ENCODE measurements at regions of chr1 and their contacts with region 1.

Region 1: DNA sequence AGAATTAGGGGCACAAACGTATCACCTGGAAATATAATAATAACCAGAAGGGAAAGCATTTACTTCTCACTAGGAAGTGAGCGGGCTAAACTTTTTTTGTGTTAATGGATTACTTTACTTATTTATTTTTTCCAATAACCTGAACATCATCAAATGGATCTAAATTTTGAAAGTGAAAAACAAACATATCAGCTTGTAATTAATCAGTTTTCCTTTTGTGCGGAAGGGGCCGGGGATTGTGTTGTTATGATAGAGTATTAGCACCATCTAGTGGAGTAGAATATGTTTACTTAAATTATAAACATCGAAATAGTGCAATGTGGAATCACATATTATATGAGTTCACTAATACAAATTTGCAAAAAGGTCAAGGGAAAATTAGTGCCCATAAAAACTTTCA is 9.0 kb downstream of the CFH start:
- DNase-seq: peak in 4 of 5 donors; percentile 38 to 42 (median 40)
- H3K4me3 ChIP-seq: no peak overlapping the region
- H3K4me3 Mint-ChIP-seq: peak overlapping the region in 6 of 8 donors; percentile 9 to 44 (median 23)
- H3K27ac ChIP-seq: no peak overlapping the region
- H3K27ac Mint-ChIP-seq: no peak overlapping the region
- H3K4me1 ChIP-seq: peaks cover 14% of the 10 kb centered on the region
- H3K4me1 Mint-ChIP-seq: peaks cover 10 to 20% (median 13%) of the 10 kb centered on the region in 4 donors
- H3K27me3 ChIP-seq: no peaks in the 10 kb centered on the region
- H3K27me3 Mint-ChIP-seq: no peaks in the 10 kb centered on the region

Region 2: GRCh38 chr1:196148367-196148970 is 512.4 kb before region 1 on chr1:
- CTCF ChIA-PET with region 1: interaction called, 35 read pairs
- POLR2A ChIA-PET with region 1: no interaction called
- intact Hi-C with region 1: no loop called
- DNase-seq: peak in 4 of 5 donors; percentile 16 to 21 (median 20)
- H3K4me3 ChIP-seq: no peak overlapping the region
- H3K4me3 Mint-ChIP-seq: no peak overlapping the region
- H3K27ac ChIP-seq: no peak overlapping the region
- H3K27ac Mint-ChIP-seq: no peak overlapping the region
- H3K4me1 ChIP-seq: no peaks in the 10 kb centered on the region
- H3K4me1 Mint-ChIP-seq: no peaks in the 10 kb centered on the region
- H3K27me3 ChIP-seq: no peaks in the 10 kb centered on the region
- H3K27me3 Mint-ChIP-seq: no peaks in the 10 kb centered on the region

Region 3: DNA sequence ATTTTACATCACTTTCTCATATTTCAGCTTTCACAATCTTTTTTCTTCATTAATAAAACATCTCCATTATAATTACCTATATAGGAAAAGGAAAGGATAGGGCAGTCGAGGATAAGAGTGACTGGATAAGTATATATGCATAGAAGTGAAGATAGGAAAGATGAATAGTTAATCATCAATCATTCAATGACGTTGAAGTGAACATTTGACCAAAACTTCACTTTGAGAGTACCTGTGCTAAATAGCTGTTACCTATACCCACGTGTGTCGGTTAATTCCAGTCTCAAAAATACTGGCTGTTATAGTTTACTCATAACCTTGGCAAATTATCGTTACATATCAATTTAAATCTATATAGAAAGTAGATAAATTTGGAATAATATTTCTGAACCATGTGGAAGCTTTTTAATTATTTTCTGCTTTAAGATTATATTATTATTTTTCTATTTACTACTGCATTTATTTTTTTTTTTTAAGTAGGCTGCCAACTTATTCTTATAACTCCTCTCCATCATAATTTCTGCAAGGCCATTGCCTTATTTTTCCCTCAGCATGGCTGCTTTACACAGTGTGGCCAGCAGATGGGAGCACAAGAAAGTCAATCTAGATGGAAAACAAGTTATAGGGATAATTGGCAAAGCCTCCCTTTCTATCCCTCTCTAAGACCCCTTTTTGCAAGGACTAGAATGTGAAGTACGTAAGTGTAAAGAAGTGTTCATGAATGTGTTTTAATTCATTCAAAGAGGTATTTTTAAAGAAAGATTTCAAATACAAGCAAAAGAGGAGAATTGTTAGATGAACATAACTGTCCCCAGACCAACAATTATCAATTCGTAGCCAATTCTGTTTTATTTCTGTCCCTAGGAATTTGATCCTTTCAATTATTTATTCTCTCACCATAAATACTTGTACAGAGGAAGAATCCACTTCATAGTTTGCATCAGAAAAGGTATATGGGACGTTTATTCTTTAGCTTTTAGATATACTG is 343.0 kb before region 1 on chr1:
- CTCF ChIA-PET with region 1: no interaction called
- POLR2A ChIA-PET with region 1: no interaction called
- intact Hi-C with region 1: loop called (anchors 2 kb)
- DNase-seq: no peak
- H3K4me3 ChIP-seq: no peak overlapping the region
- H3K4me3 Mint-ChIP-seq: no peak overlapping the region
- H3K27ac ChIP-seq: no peak overlapping the region
- H3K27ac Mint-ChIP-seq: no peak overlapping the region
- H3K4me1 ChIP-seq: no peaks in the 10 kb centered on the region
- H3K4me1 Mint-ChIP-seq: no peaks in the 10 kb centered on the region
- H3K27me3 ChIP-seq: no peaks in the 10 kb centered on the region
- H3K27me3 Mint-ChIP-seq: no peaks in the 10 kb centered on the region

Region 4: GRCh38 chr1:196611873-196612272 is 49.0 kb before region 1 on chr1:
- CTCF ChIA-PET with region 1: no interaction called
- POLR2A ChIA-PET with region 1: no interaction called
- intact Hi-C with region 1: no loop called
- DNase-seq: no peak
- H3K4me3 ChIP-seq: no peak overlapping the region
- H3K4me3 Mint-ChIP-seq: no peak overlapping the region
- H3K27ac ChIP-seq: no peak overlapping the region
- H3K27ac Mint-ChIP-seq: no peak overlapping the region
- H3K4me1 ChIP-seq: no peaks in the 10 kb centered on the region
- H3K4me1 Mint-ChIP-seq: peaks cover 5 to 8% (median 7%) of the 10 kb centered on the region in 4 donors
- H3K27me3 ChIP-seq: no peaks in the 10 kb centered on the region
- H3K27me3 Mint-ChIP-seq: peaks cover 21 to 22% of the 10 kb centered on the region in 2 donors

Region 5: GRCh38 chr1:196680107-196680506 is 19.3 kb after region 1 on chr1:
- CTCF ChIA-PET with region 1: no interaction called
- POLR2A ChIA-PET with region 1: no interaction called
- intact Hi-C with region 1: no loop called
- DNase-seq: no peak
- H3K4me3 ChIP-seq: no peak overlapping the region
- H3K4me3 Mint-ChIP-seq: no peak overlapping the region
- H3K27ac ChIP-seq: no peak overlapping the region
- H3K27ac Mint-ChIP-seq: no peak overlapping the region
- H3K4me1 ChIP-seq: no peaks in the 10 kb centered on the region
- H3K4me1 Mint-ChIP-seq: peaks cover 0 to 3% (median 2%) of the 10 kb centered on the region in 4 donors
- H3K27me3 ChIP-seq: no peaks in the 10 kb centered on the region
- H3K27me3 Mint-ChIP-seq: no peaks in the 10 kb centered on the region